ENCODE measurements at regions of chr1 and their contacts with region 1.

Region 1: GRCh38 chr1:113042285-113043143 is 30.5 kb upstream of the LRIG2 start:
- DNase-seq: peak; percentile 67 to 87 (median 71)
- H3K4me3 ChIP-seq: no peak overlapping the region
- H3K27ac ChIP-seq: no peak overlapping the region
- H3K4me1 ChIP-seq: peaks cover 7 to 8% of the 10 kb centered on the region in 2 donors
- H3K27me3 ChIP-seq: no peaks in the 10 kb centered on the region
- CTCF ChIP-seq: peak; percentile 37 to 81 (median 66)
- POLR2A ChIP-seq: no peak

Region 2: GRCh38 chr1:112722601-112723510 is 319.7 kb before region 1 on chr1:
- intact Hi-C with region 1: loop called (anchors 10 kb)
- DNase-seq: no peak
- H3K4me3 ChIP-seq: peak overlapping the region in 1 of 4 donors; percentile 38
- H3K27ac ChIP-seq: no peak overlapping the region
- H3K4me1 ChIP-seq: peaks cover 0 to 9% of the 10 kb centered on the region in 2 donors
- H3K27me3 ChIP-seq: no peaks in the 10 kb centered on the region
- CTCF ChIP-seq: no peak
- POLR2A ChIP-seq: no peak

Region 3: DNA sequence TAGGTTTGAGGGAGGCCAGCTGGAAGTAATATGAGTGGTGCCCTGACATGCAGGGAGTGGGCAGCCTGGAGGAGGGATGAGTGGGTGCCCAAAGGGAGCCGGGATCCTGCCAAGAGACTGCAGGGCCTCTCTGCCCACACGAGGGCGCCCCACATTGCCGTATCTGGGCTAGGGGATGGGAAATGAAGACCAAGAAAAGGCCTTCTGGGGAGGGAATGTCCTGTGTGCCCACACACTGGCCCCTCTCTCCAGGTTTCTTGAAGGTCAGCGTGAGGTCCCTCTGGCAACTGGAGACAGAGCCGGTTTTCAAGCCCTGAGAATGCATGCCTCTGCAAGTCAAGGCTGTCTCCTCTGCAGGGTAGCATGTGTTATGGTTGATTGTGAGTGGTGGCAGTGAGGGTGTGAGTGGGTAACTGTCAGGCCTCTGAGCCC is 233.2 kb before region 1 on chr1:
- intact Hi-C with region 1: loop called in 1 of 2 experiments (anchors 5 kb)
- DNase-seq: peak; percentile 60 to 84 (median 70)
- H3K4me3 ChIP-seq: no peak overlapping the region
- H3K27ac ChIP-seq: no peak overlapping the region
- H3K4me1 ChIP-seq: no peaks in the 10 kb centered on the region
- H3K27me3 ChIP-seq: no peaks in the 10 kb centered on the region
- CTCF ChIP-seq: peak; percentile 54 to 83 (median 67)
- POLR2A ChIP-seq: no peak

Region 4: DNA sequence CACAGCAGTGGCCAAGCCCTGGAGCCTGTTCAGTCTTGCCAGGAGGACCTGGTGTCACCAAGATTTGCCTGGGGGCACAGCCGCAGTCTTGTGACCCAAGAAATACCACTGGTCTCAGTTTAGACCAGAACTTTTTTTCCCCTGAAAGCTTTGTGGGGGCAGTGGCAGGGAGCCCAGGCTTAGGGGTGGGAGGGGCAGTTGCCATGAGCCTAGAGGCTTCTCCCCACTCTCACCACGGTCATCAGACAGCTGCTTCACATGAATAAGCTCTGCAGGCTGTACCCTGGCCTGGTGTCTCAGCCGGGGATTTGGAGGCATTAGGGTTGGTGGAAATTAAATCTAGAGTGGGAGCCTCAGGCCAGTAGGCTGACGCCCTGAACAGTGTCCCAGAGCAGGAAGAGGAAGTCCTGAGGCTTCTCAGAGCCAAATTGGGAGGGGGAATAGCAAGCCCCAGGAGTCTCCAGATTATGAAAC is 160.2 kb before region 1 on chr1:
- intact Hi-C with region 1: loop called (anchors 2 to 5 kb)
- DNase-seq: no peak
- H3K4me3 ChIP-seq: no peak overlapping the region
- H3K27ac ChIP-seq: peak overlapping the region in 1 of 5 donors; percentile 36
- H3K4me1 ChIP-seq: no peaks in the 10 kb centered on the region
- H3K27me3 ChIP-seq: no peaks in the 10 kb centered on the region
- CTCF ChIP-seq: no peak
- POLR2A ChIP-seq: no peak